GM12878 (cell line): ENCODE measurements at regions of chr22 and their contacts with region 1.

Region 1: DNA sequence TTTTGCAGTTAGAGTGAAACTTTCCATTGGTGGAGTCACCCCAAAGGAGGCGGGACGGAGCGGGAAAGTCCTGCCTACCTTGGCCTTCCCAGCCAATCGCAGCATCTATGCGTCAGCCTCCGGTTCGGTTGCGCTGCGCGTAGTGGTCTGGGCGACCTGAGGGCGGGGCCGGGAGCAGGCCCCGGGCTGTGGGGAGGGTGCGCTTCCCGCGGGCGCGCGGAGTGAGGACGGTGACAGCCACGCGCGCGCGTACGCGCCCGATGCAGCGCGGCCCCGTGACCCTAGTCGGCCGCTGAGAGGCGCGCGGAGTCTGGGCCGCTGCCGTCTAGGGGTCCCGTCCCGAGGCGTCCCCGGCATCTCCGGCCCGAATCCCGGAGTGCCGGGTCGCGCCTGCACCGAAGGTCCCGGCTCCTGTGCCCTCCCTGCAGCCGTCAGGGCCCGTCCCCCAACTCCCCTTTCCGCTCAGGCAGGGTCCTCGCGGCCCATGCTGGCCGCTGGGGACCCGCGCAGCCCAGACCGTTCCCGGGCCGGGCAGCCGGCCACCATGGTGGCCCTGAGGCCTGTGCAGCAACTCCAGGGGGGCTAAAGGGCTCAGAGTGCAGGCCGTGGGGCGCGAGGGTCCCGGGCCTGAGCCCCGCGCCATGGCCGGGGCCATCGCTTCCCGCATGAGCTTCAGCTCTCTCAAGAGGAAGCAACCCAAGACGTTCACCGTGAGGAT is at the start of gene NF2:
- DNase-seq: peak; percentile 100
- ATAC-seq: peak; percentile 98
- H3K4me3 ChIP-seq: peak within 1 kb of the TSS; percentile 94
- H3K27ac ChIP-seq: peak within 1 kb of the TSS; percentile 81
- H3K4me1 ChIP-seq: no peaks in the 10 kb centered on the region; the same call in 1 of the 2 replicates
- H3K27me3 ChIP-seq: no peaks in the 10 kb centered on the region
- CTCF ChIP-seq: peak in 1 of 3 experiments; percentile 16; a peak in 1 of 6 replicates
- EP300 ChIP-seq: no peak
- POLR2A ChIP-seq: peak; percentile 95
- RAD21 ChIP-seq: no peak
- polyA plus RNA-seq, gene NF2: 2.2 to 3.0 TPM

Region 2: DNA sequence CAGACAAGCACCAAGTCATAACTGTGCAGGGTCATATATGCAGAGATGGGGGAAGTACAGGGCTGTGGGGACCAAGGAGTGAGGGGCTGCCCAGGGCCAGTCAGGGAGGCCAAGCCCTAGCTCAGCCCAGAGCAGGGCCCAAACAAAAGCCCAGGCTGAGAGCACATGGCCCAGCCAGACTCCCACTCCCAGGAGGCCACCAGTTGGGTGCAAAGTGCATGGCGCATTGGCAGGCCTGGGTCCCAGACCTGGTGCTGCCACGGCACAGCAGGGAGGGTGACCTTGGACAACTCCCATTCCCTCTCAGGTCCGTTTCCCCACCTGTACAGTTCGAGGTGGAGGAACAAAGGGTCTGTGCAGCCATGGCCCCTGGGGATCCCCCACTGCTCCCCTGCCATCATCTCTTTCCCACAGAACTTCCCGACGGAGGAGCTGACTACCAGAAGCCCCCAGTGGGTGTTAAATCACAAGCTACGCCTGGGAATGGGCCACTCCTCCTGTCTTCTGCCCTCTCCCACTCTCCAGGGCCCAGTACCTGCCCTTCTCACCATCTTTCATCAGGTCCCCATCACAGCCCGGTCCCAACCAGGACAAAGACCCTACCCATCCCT is 23.2 kb before region 1 on chr22:
- CTCF ChIA-PET with region 1: interaction called, 3 read pairs
- POLR2A ChIA-PET with region 1: no interaction called
- RAD21 ChIA-PET with region 1: no interaction called
- SMC1A ChIA-PET with region 1: no interaction called
- in situ Hi-C with region 1: no loop called
- intact Hi-C with region 1: loop called (anchors 2 kb)
- DNase-seq: no peak
- ATAC-seq: peak; percentile 66
- H3K4me3 ChIP-seq: peak overlapping the region; percentile 99
- H3K27ac ChIP-seq: peak overlapping the region; percentile 51
- H3K4me1 ChIP-seq: peaks cover 4% of the 10 kb centered on the region; the same call in 1 of the 2 replicates
- H3K27me3 ChIP-seq: no peaks in the 10 kb centered on the region
- CTCF ChIP-seq: no peak
- EP300 ChIP-seq: no peak
- POLR2A ChIP-seq: no peak
- RAD21 ChIP-seq: no peak

Region 3: GRCh38 chr22:29587938-29588699 is 15.4 kb before region 1 on chr22:
- CTCF ChIA-PET with region 1: interaction called, 35 read pairs
- POLR2A ChIA-PET with region 1: interaction called, 5 read pairs
- RAD21 ChIA-PET with region 1: no interaction called
- SMC1A ChIA-PET with region 1: interaction called, 7 read pairs
- in situ Hi-C with region 1: no loop called
- intact Hi-C with region 1: no loop called
- DNase-seq: no peak
- ATAC-seq: peak; percentile 19; the same call in 1 of the 3 replicates
- H3K4me3 ChIP-seq: no peak overlapping the region
- H3K27ac ChIP-seq: no peak overlapping the region
- H3K4me1 ChIP-seq: no peaks in the 10 kb centered on the region
- H3K27me3 ChIP-seq: no peaks in the 10 kb centered on the region
- CTCF ChIP-seq: no peak
- EP300 ChIP-seq: no peak
- POLR2A ChIP-seq: no peak
- RAD21 ChIP-seq: no peak

Region 4: DNA sequence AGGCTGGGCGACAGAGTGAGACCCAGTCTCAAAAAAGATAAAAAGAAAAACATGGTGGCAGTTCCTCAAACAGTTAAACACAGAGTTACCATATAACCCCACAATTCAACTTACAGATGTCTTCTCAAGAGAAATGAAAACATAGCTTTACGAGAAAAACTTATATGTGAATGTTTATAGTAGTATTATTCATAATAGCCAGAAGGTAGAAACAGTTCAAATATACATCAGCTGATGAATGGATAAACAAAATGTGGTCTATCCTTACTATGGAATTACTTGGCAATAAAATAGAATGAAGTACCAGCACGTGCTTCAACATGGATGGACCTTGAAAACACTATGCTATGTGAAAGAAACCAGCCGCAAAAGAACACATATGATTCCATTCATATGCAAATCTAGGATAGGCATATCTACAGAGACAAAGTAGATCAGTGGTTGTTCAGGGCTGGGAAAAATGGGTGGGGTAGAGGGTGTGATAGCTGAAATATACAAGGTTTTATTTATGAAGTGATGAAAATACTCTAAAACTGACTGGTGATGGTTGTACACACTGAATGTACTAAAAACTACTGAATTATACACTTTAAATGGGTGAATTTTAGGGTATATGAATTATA is 12.3 kb after region 1 on chr22:
- CTCF ChIA-PET with region 1: interaction called, 19 read pairs
- POLR2A ChIA-PET with region 1: interaction called, 3 read pairs
- RAD21 ChIA-PET with region 1: interaction called, 3 read pairs
- SMC1A ChIA-PET with region 1: interaction called, 8 read pairs
- in situ Hi-C with region 1: no loop called
- intact Hi-C with region 1: no loop called
- DNase-seq: no peak
- ATAC-seq: no peak
- H3K4me3 ChIP-seq: no peak overlapping the region
- H3K27ac ChIP-seq: no peak overlapping the region
- H3K4me1 ChIP-seq: peaks cover 18% of the 10 kb centered on the region
- H3K27me3 ChIP-seq: no peaks in the 10 kb centered on the region
- CTCF ChIP-seq: no peak
- EP300 ChIP-seq: no peak
- POLR2A ChIP-seq: no peak
- RAD21 ChIP-seq: no peak